Breast epithelium (tissue), 4 donors: ENCODE measurements at regions of chr19 and their contacts with region 1.

Region 1: DNA sequence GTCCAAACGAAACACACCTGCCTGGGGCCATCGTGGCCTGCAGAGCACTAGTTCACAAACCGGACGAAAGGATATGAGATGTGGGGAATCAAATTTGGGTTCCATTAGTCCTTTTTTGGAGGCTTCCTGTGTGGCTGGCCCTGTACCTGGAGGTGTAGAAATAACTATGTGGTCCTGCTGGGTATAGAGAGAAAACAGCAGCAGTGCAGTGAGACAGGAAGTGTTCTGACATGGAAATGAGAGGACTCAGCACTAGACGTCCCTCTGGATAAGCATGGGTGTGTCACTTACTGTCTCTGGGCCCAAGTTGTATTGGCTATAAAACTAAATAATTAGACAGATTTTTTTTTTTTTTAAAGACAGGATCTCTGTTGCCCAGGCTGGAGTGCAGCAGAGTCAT is 12.3 kb downstream of the KDELR1 start:
- DNase-seq: no peak
- H3K4me3 ChIP-seq: no peak overlapping the region
- H3K27ac ChIP-seq: no peak overlapping the region
- H3K4me1 ChIP-seq: no peaks in the 10 kb centered on the region
- H3K27me3 ChIP-seq: no peaks in the 10 kb centered on the region
- CTCF ChIP-seq: no peak
- POLR2A ChIP-seq: no peak

Region 2: GRCh38 chr19:47994209-47994802 is 384.8 kb before region 1 on chr19 and contains the start of gene ELSPBP1:
- intact Hi-C with region 1: loop called (anchors 5 kb)
- DNase-seq: no peak
- H3K4me3 ChIP-seq: no peak within 1 kb of the TSS
- H3K27ac ChIP-seq: no peak within 1 kb of the TSS
- H3K4me1 ChIP-seq: no peaks in the 10 kb centered on the region
- H3K27me3 ChIP-seq: peaks cover 0 to 27% of the 10 kb centered on the region in 2 donors
- CTCF ChIP-seq: no peak
- POLR2A ChIP-seq: no peak
- total RNA-seq, gene ELSPBP1: not detected

Region 3: GRCh38 chr19:48363810-48364563 is 15.1 kb before region 1 on chr19 and contains the starts of genes SYNGR4 and TMEM143:
- intact Hi-C with region 1: no loop called
- DNase-seq: peak; percentile 98 to 99
- H3K4me3 ChIP-seq: peak within 1 kb of the TSS; percentile 66 to 73 (median 70)
- H3K27ac ChIP-seq: peak within 1 kb of the TSS; percentile 95
- H3K4me1 ChIP-seq: no peaks in the 10 kb centered on the region
- H3K27me3 ChIP-seq: no peaks in the 10 kb centered on the region
- CTCF ChIP-seq: no peak
- POLR2A ChIP-seq: no peak
- total RNA-seq, gene SYNGR4: not detected
- total RNA-seq, gene TMEM143: 5.9 to 10.5 (median 6.2) TPM